ENCODE measurements at regions of chr12 and their contacts with region 1.

Region 1: GRCh38 chr12:71780237-71780822 is 25.7 kb downstream of the RAB21 start:
- DNase-seq: no peak
- ATAC-seq: no peak

Region 2: DNA sequence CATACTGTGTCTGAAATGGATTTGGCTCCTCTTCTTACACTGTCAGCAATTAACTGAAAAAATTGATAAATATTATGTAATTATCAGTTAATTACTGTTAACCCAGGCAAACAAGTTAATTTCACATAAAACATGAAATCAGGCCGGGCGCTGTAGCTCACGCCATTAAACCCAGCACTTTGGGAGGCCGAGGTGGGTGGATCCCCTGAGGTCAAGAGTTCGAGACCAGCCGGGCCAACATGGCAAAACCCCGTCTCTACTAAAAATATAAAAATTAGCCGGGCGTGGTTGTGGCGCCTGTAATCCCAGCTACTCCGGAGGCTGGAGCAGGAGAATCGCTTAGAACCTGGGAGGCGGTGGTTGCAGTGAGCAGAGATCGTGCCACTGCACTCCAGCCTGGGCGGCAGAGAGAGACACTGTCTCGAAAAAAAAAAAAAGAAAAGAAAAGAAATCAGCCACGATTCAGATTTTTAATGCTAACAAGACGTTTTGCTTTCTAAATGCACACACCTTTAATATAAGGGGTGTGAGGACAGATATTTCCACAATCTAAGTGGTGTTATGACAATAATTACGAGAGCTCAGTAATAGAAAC is 94.9 kb before region 1 on chr12:
- intact Hi-C with region 1: no loop called
- DNase-seq: no peak
- ATAC-seq: peak; percentile 7

Region 3: DNA sequence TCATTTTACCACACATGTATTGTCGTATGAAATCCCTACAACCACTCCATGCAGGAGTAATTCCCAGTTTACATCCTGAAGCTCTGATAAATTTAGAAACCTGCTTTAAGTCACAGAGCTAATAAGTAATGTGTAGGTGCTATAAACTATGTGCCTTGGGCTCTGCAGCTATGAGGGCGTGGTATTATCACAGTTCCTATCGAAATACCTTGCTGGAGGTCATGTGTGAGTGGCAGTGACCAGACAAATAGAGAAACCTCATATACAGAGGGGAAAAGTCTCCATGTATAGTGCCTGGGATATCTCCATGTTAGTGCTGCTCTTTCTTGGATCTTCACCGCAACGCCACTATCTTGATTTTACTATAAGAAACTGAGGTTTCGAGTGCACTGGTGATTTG is 58.3 kb after region 1 on chr12:
- intact Hi-C with region 1: loop called (anchors 5 kb)
- DNase-seq: no peak
- ATAC-seq: no peak

Measured in Right ventricle myocardium superior (tissue), 1 donor.